PC-9 (cell line): ENCODE measurements at regions of chr21 and their contacts with region 1.

Region 1: GRCh38 chr21:39388038-39388810 is 39.3 kb upstream of the HMGN1 start:
- DNase-seq: peak; percentile 62 to 84
- H3K4me3 ChIP-seq: peak overlapping the region; percentile 68
- H3K27ac ChIP-seq: peak overlapping the region; percentile 64
- H3K4me1 ChIP-seq: 0 out of 2 replicates have a peak, but pooled peaks cover 4% of the 10 kb centered on the region
- H3K27me3 ChIP-seq: no peaks in the 10 kb centered on the region
- CTCF ChIP-seq: peak; percentile 76

Region 2: DNA sequence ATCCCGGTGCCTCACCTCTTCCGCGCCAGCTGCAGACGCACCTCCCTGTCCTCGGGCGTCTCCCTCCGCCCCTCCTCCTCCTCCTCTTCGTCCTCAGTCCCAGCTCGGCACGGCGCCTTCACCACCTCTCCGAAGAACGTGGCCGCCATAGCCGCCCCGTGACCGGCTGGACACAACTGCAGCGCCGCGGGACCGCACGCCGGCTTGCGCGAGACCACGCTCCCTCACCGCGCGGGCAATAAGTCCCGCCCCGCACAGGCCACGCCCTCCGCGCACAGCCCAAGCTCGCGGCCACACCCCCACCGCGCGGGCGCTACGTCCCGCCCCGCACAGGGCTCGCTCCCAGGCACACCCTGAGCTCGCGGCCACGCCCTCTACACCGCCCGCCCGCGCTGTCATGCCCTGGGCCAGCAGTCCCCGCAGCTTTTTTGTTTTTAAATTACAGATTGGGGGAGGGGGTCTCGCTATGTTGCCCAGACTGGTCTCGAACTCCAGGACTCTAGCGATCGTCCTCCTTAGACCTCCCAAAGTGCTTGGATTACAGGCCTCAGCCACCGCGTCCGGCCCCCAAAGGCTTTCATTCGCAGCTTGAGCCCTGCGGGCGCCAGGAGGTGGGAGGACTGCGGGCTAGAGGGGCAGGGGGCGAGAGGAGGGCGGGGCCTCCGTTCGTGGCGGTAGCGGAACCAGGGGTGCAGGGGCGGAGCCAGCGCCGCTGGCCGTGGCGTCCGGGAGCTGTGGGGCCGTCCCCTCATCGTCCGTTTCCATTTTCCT is 204.8 kb before region 1 on chr21 and contains the start of gene PSMG1:
- CTCF ChIA-PET with region 1: no interaction called
- POLR2A ChIA-PET with region 1: interaction called, 8 read pairs
- intact Hi-C with region 1: loop called (anchors 10 kb)
- DNase-seq: peak; percentile 73 to 91
- H3K4me3 ChIP-seq: peak within 1 kb of the TSS; percentile 92
- H3K27ac ChIP-seq: peak within 1 kb of the TSS; percentile 61
- H3K4me1 ChIP-seq: peaks cover 9% of the 10 kb centered on the region
- H3K27me3 ChIP-seq: no peaks in the 10 kb centered on the region
- CTCF ChIP-seq: no peak
- total RNA-seq, gene PSMG1: 20.4 and 29.0 TPM in 2 replicates

Region 3: DNA sequence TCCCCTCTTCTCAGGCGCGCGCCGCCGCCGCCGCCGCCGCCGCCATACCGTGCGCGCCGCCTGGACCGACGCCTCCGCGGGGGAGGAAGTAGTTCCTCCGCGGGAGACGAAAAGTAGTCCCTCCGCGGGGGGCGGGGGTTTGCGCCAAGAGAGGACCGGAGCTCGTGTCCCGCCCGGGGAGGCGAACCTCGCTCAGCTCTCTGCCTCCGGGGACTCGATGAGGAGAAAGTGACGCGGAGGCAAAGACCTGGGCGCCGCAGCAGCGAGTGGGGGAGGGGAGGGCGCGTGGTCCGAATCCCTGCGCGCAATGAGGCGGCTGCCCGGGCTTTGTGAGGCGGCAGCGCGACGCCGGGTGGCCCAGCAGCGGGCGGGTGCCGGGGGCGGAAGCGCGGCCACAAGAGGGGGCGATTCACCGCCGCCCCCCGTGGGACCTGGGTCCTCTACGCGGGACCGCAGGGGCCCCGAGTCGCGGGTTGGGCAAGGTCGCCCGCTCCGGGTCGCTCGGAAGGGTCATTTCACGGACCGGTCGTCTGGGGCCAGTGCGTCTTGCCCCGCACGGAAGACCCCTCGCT is 74.6 kb before region 1 on chr21 and contains the start of gene BRWD1:
- CTCF ChIA-PET with region 1: interaction called, 7 read pairs
- POLR2A ChIA-PET with region 1: no interaction called
- intact Hi-C with region 1: loop called (anchors 1 kb)
- DNase-seq: peak; percentile 52 to 67
- H3K4me3 ChIP-seq: peak within 1 kb of the TSS; percentile 81
- H3K27ac ChIP-seq: peak within 1 kb of the TSS; percentile 85
- H3K4me1 ChIP-seq: peaks cover 22% of the 10 kb centered on the region
- H3K27me3 ChIP-seq: no peaks in the 10 kb centered on the region
- CTCF ChIP-seq: no peak; the same call in 1 of the 2 replicates
- total RNA-seq, gene BRWD1: 38.9 and 42.9 TPM in 2 replicates

Region 4: DNA sequence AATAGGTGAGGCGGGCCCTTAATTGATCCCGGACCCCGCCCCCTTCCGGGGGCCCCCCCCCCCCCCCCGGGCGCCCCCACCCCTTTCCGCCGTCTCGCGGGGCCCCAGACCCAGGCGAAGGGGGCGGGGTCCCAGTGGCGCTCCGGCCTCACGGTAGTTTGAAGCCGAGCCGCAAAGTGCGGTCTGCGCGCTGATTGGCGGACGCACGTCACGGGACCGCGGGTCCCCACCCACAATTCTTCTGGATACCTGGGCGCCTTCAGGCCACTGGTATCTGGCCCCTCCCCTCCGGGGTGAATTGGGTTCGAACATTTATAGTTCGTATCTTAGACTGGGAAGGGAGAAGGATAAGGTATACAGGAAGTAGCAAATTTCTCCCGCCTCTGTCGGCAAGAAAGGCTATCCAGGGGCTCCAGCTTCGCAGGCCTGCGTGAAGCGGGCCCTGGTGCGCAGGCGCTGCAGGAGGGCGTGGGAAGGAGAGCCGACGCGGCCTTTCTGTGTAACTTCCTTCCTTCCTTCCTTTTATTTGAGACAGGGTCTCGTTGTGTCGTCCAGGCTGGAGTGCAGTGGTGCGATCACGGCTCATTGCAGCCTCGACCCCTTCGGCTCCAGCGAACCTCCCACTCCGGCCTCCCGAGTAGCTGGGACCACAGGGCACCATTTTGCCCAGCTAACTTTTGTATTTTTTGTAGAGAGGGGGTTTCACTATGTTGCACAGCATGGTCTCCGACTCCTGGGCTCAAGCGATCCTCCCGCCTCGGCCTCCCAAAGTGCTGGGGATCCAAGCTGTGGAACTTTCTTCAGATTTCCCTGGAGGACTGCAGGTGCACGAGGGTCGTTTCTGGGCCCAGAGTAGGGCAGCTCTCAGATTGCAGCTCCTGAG is 38.8 kb before region 1 on chr21:
- CTCF ChIA-PET with region 1: interaction called, 7 read pairs
- POLR2A ChIA-PET with region 1: no interaction called
- intact Hi-C with region 1: loop called (anchors 1 kb)
- DNase-seq: peak; percentile 89 to 96
- H3K4me3 ChIP-seq: peak overlapping the region; percentile 72
- H3K27ac ChIP-seq: peak overlapping the region; percentile 85
- H3K4me1 ChIP-seq: peaks cover 32% of the 10 kb centered on the region
- H3K27me3 ChIP-seq: no peaks in the 10 kb centered on the region
- CTCF ChIP-seq: no peak

Region 5: GRCh38 chr21:39373644-39374043 is 14.6 kb before region 1 on chr21:
- CTCF ChIA-PET with region 1: interaction called, 19 read pairs
- POLR2A ChIA-PET with region 1: interaction called, 3 read pairs
- intact Hi-C with region 1: no loop called
- DNase-seq: no peak
- H3K4me3 ChIP-seq: no peak overlapping the region
- H3K27ac ChIP-seq: no peak overlapping the region
- H3K4me1 ChIP-seq: 0 out of 2 replicates have a peak, but pooled peaks cover 10% of the 10 kb centered on the region
- H3K27me3 ChIP-seq: no peaks in the 10 kb centered on the region
- CTCF ChIP-seq: no peak

Region 6: DNA sequence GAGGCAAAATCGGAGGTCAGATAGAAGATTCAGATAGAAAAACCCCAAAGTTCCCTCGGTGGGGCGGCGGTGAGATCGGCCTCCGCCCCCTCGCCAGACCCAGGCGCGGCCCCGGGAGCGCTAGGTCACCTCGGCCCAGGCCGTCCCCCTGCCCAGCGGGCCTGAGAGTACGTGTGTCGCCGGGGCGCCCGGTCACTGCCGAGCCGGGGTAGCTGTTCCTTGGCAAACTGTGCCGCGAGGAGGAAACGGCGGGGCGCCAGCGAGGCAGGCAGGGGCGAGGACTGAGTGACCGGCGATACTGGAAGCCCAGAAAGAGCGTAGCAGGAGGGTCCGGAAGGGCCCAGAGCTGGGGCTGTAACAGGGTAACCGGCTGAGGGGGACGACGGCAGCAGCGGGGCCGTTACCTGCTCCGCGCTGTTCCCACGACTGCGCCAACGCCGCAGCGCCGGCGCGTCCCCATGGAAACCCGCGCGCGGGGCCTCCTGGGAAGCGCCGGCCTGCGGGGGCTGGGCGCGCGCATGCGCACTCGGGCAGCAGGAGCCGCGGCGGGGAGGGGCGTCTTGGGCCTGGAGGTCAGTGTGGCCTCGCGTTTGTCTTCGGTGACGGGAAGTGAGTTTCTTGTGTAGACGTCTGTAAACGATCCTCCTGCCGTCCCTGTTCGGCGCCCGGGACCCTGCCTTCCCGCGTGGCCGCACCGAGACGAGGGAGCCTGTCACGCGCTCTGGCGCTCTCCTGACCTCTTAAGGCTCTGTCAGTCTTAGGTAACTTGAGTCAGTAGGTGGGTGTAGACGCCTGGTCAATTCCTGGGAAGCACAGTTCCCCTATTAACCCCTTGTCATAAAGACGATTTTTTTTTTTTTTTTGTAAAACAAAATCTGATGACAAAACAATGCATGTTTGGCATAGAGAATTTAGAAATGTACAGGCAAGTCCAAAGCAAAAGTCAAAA is 57.4 kb after region 1 on chr21 and contains the start of gene LCA5L:
- CTCF ChIA-PET with region 1: no interaction called
- POLR2A ChIA-PET with region 1: no interaction called
- intact Hi-C with region 1: loop called (anchors 5 kb)
- DNase-seq: peak; percentile 70 to 92
- H3K4me3 ChIP-seq: peak within 1 kb of the TSS; percentile 88
- H3K27ac ChIP-seq: peak within 1 kb of the TSS; percentile 64
- H3K4me1 ChIP-seq: peaks cover 6% of the 10 kb centered on the region; the same call in 1 of the 2 replicates
- H3K27me3 ChIP-seq: no peaks in the 10 kb centered on the region
- CTCF ChIP-seq: no peak
- total RNA-seq, gene LCA5L: 1.8 and 2.4 TPM in 2 replicates

Region 7: DNA sequence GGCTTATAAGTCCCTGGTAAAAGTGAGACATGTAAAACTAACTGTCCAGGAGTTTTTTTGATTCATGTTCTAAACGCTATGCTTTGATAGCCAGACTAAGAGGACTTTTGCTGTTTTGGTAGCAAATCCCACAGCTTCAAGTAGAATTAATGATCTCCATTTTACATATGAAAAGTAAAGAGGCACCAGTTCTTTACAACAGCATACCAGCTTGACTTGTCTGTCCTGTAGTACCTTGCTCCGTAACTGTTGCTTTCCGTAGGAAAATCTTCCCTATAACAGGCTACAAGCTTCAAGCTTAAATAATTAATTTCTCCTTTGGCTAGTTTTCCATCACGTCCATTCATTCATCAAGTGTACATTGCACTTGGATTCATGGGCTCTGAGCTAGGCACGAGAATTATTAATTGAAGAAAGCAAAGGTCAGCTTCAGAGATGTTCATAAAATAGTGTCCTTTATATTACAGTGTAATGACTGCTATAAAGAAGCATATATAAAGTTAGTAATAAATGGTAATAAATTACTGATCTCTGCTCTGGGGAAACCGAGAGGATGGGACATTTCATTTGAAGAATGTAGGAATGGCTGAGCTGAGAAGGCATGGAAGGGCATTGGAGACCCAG is 253.7 kb after region 1 on chr21:
- CTCF ChIA-PET with region 1: interaction called, 10 read pairs
- POLR2A ChIA-PET with region 1: no interaction called
- intact Hi-C with region 1: no loop called
- DNase-seq: no peak
- H3K4me3 ChIP-seq: no peak overlapping the region
- H3K27ac ChIP-seq: no peak overlapping the region
- H3K4me1 ChIP-seq: no peaks in the 10 kb centered on the region
- H3K27me3 ChIP-seq: peaks cover 52% of the 10 kb centered on the region
- CTCF ChIP-seq: no peak